Activated CD4-positive, alpha-beta T cell treated with anti-CD3 and anti-CD28 coated beads for 36 hours (primary cell): ENCODE measurements at regions of chr18 and their contacts with region 1.

Region 1: GRCh38 chr18:50878345-50879301 is at the start of gene ME2:
- DNase-seq: peak; percentile 94
- ATAC-seq: peak; percentile 97
- H3K4me3 Mint-ChIP-seq: peak within 1 kb of the TSS; percentile 90
- H3K27ac Mint-ChIP-seq: peak within 1 kb of the TSS; percentile 95
- H3K4me1 Mint-ChIP-seq: peaks cover 35% of the 10 kb centered on the region
- H3K27me3 Mint-ChIP-seq: peaks cover 2% of the 10 kb centered on the region
- total RNA-seq, gene ME2: 146 to 178 TPM

Region 2: GRCh38 chr18:49486953-49487710 is 1391.5 kb before region 1 on chr18 and contains the start of gene C18orf32:
- CTCF ChIA-PET with region 1: no interaction called
- POLR2A ChIA-PET with region 1: interaction called, 4 read pairs
- intact Hi-C with region 1: loop called in 1 of 2 experiments (anchors 5 kb)
- DNase-seq: peak; percentile 96
- ATAC-seq: peak; percentile 92
- H3K4me3 Mint-ChIP-seq: peak within 1 kb of the TSS; percentile 95
- H3K27ac Mint-ChIP-seq: peak within 1 kb of the TSS; percentile 100
- H3K4me1 Mint-ChIP-seq: peaks cover 60% of the 10 kb centered on the region
- H3K27me3 Mint-ChIP-seq: no peaks in the 10 kb centered on the region
- total RNA-seq, gene C18orf32: 12.7 to 20.0 TPM

Region 3: GRCh38 chr18:50374753-50375391 is 503.8 kb before region 1 on chr18 and contains the start of gene SKA1:
- CTCF ChIA-PET with region 1: no interaction called
- POLR2A ChIA-PET with region 1: no interaction called
- intact Hi-C with region 1: loop called in 1 of 2 experiments (anchors 1 kb)
- DNase-seq: peak; percentile 96
- ATAC-seq: peak; percentile 99
- H3K4me3 Mint-ChIP-seq: peak within 1 kb of the TSS; percentile 83
- H3K27ac Mint-ChIP-seq: peak within 1 kb of the TSS; percentile 79
- H3K4me1 Mint-ChIP-seq: peaks cover 2% of the 10 kb centered on the region
- H3K27me3 Mint-ChIP-seq: peaks cover under 1% of the 10 kb centered on the region
- total RNA-seq, gene SKA1: 38.6 to 48.3 TPM

Region 4: GRCh38 chr18:50902797-50903196 is 24.2 kb after region 1 on chr18:
- CTCF ChIA-PET with region 1: no interaction called
- POLR2A ChIA-PET with region 1: no interaction called
- intact Hi-C with region 1: loop called (anchors 1 kb)
- DNase-seq: no peak
- ATAC-seq: no peak
- H3K4me3 Mint-ChIP-seq: no peak overlapping the region
- H3K27ac Mint-ChIP-seq: no peak overlapping the region
- H3K4me1 Mint-ChIP-seq: peaks cover 37% of the 10 kb centered on the region
- H3K27me3 Mint-ChIP-seq: no peaks in the 10 kb centered on the region

Region 5: GRCh38 chr18:51029694-51030536 is 151.3 kb after region 1 on chr18 and contains the start of gene SMAD4:
- CTCF ChIA-PET with region 1: no interaction called
- POLR2A ChIA-PET with region 1: interaction called, 12 read pairs
- intact Hi-C with region 1: loop called (anchors 1 kb)
- DNase-seq: peak; percentile 99
- ATAC-seq: peak; percentile 84
- H3K4me3 Mint-ChIP-seq: peak within 1 kb of the TSS; percentile 85
- H3K27ac Mint-ChIP-seq: peak within 1 kb of the TSS; percentile 94
- H3K4me1 Mint-ChIP-seq: peaks cover 55% of the 10 kb centered on the region
- H3K27me3 Mint-ChIP-seq: no peaks in the 10 kb centered on the region
- total RNA-seq, gene SMAD4: 79.3 to 89.5 TPM

Region 6: DNA sequence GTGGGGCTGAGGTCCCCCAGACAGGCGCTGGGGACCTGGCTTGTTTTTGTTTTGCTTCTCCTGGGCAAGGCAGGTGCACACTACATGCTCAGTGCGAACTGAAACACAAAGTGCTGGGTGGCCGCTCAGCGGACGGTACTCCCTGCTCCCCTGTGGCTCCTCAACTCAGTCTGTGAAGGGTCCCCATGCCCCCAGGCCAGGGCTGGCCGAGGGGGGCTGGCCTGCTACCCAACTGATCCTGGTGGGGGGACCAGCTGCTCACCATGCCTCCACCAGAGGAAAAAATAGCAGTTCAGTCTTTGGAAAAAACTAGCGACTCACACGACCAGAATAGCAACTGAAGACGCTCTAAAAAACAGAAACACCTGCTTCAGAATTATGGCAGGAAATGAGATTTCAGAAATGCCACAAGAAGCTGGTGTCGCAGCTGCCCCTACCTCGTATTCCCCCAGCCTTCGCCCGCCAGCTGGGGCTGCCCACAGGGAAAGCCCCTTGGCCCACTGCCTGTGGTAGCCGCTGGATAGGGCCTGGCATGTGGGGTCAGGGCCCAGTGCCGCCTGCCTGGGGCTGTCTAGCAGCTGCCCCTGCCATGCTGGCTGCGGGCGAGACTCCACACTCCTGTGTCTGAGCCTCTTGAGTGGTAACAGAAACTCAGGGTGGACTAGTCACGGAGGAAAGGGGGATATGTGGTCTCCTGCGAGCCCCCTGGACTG is 275.2 kb after region 1 on chr18:
- CTCF ChIA-PET with region 1: no interaction called
- POLR2A ChIA-PET with region 1: no interaction called
- intact Hi-C with region 1: loop called in 1 of 2 experiments (anchors 5 kb)
- DNase-seq: peak; percentile 67
- ATAC-seq: peak; percentile 28
- H3K4me3 Mint-ChIP-seq: peak overlapping the region; percentile 64
- H3K27ac Mint-ChIP-seq: peak overlapping the region; percentile 98
- H3K4me1 Mint-ChIP-seq: peaks cover 52% of the 10 kb centered on the region
- H3K27me3 Mint-ChIP-seq: no peaks in the 10 kb centered on the region

Region 7: GRCh38 chr18:51300912-51301311 is 422.3 kb after region 1 on chr18:
- CTCF ChIA-PET with region 1: no interaction called
- POLR2A ChIA-PET with region 1: no interaction called
- intact Hi-C with region 1: no loop called
- DNase-seq: no peak
- ATAC-seq: peak; percentile 55
- H3K4me3 Mint-ChIP-seq: no peak overlapping the region
- H3K27ac Mint-ChIP-seq: no peak overlapping the region
- H3K4me1 Mint-ChIP-seq: no peaks in the 10 kb centered on the region
- H3K27me3 Mint-ChIP-seq: peaks cover 4% of the 10 kb centered on the region